ENCODE measurements at regions of chr5 and their contacts with region 1.

Region 1: GRCh38 chr5:138503487-138504270 is 38.4 kb downstream of the EGR1 start:
- DNase-seq: no peak
- ATAC-seq: peak; percentile 76

Region 2: GRCh38 chr5:138391859-138392386 is 111.8 kb before region 1 on chr5:
- intact Hi-C with region 1: no loop called
- DNase-seq: peak; percentile 73
- ATAC-seq: peak; percentile 97

Region 3: DNA sequence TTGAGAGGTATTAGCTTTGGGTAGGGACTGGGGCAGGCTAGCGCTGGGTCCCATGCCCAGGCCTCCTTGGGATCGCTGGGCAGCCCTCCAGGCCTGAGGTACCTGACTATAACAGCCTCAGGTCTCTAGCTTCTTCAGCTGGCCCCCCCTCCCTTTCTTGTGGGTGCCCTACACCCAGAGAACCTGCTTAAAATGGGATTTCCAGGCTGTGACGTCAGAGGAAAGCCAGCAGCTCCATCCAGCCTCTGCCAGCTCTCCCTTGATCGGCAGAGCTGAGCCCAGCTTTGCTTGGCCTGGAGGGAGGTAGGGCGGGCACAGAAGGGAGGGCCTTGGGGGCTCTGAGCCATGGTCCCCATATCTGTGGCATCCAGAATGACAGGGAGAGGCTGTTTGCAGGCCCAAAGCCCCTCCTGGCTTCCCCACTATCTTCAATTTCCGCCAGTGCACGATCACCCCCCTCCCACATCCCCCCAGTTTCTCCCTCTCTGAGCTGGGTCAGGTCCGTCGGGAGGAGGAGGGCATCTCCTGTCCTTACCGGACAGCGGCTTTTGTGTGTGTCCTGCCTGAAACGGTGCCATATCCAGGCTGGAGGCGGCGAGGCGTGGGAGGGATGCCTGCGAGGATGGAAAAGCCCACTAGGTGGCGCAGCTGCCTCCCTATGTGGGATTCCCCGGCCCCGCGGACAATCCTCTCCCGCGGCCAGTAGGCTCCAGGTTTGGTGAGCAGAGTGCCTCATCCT is 54.0 kb before region 1 on chr5:
- intact Hi-C with region 1: loop called (anchors 5 kb)
- DNase-seq: peak; percentile 94
- ATAC-seq: peak; percentile 96